IMR-90 (cell line): ENCODE measurements at regions of chr12 and their contacts with region 1.

Region 1: DNA sequence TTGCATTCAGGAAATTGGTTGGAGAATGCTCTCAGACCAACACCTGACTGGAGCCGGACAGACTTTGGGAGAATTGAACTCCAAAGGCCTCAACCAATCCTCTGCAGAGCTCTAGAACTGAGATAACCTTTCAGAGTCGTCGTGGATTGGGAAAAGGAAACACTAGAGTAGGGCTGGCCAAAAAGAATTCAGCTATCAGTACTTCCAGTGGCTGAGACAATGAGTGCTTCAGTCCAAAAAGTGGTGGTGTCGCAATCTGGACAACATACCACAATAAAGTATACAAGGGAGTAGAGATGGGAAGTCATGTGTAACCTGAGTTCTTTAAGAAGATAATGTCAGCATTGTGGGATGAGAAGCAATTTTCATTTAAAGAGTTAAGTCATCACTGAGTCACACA is 377.1 kb downstream of the SLC16A7 start:
- DNase-seq: peak; percentile 88
- ATAC-seq: peak; percentile 86
- H3K4me3 ChIP-seq: no peak overlapping the region
- H3K27ac ChIP-seq: peak overlapping the region; percentile 41
- H3K4me1 ChIP-seq: peaks cover 5% of the 10 kb centered on the region
- H3K27me3 ChIP-seq: no peaks in the 10 kb centered on the region
- CTCF ChIP-seq: no peak
- POLR2A ChIP-seq: no peak
- RAD21 ChIP-seq: no peak

Region 2: GRCh38 chr12:59904874-59905521 is 67.9 kb before region 1 on chr12:
- CTCF ChIA-PET with region 1: no interaction called
- POLR2A ChIA-PET with region 1: no interaction called
- dilution Hi-C with region 1: no loop called
- in situ Hi-C with region 1: no loop called
- intact Hi-C with region 1: loop called (anchors 5 kb)
- DNase-seq: peak; percentile 74
- ATAC-seq: peak; percentile 74
- H3K4me3 ChIP-seq: no peak overlapping the region
- H3K27ac ChIP-seq: peak overlapping the region; percentile 53; the same call in 1 of the 2 replicates
- H3K4me1 ChIP-seq: peaks cover 5% of the 10 kb centered on the region
- H3K27me3 ChIP-seq: no peaks in the 10 kb centered on the region
- CTCF ChIP-seq: no peak
- POLR2A ChIP-seq: no peak
- RAD21 ChIP-seq: no peak

Region 3: DNA sequence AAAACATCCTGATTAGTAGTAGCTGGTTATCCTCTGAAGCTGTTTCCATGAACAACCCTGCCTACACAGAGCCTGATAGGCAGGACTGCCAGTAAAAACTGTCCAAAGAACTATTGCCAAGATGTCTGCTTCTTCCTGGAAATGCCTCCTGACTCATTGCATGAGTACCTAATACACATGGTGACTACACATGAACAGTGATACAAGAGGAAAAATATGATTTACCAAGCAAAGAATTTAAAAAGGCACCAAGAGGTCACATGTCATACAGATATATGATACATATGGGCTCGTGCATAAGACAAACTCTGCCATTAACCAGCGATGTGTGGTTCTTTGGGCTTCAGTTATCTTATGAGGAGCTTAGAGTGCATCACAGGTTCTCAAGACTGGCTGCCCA is 175.2 kb after region 1 on chr12:
- CTCF ChIA-PET with region 1: no interaction called
- POLR2A ChIA-PET with region 1: no interaction called
- dilution Hi-C with region 1: no loop called
- in situ Hi-C with region 1: no loop called
- intact Hi-C with region 1: no loop called
- DNase-seq: peak; percentile 92
- ATAC-seq: peak; percentile 78
- H3K4me3 ChIP-seq: no peak overlapping the region
- H3K27ac ChIP-seq: peak overlapping the region; percentile 76
- H3K4me1 ChIP-seq: peaks cover 2% of the 10 kb centered on the region
- H3K27me3 ChIP-seq: no peaks in the 10 kb centered on the region
- CTCF ChIP-seq: no peak
- POLR2A ChIP-seq: no peak
- RAD21 ChIP-seq: no peak